Right ventricle myocardium inferior (tissue), 1 donor: ENCODE measurements at regions of chr1 and their contacts with region 1.

Region 1: GRCh38 chr1:6743189-6744101 is 41.8 kb upstream of the CAMTA1 start:
- DNase-seq: no peak
- ATAC-seq: peak; percentile 93

Region 2: DNA sequence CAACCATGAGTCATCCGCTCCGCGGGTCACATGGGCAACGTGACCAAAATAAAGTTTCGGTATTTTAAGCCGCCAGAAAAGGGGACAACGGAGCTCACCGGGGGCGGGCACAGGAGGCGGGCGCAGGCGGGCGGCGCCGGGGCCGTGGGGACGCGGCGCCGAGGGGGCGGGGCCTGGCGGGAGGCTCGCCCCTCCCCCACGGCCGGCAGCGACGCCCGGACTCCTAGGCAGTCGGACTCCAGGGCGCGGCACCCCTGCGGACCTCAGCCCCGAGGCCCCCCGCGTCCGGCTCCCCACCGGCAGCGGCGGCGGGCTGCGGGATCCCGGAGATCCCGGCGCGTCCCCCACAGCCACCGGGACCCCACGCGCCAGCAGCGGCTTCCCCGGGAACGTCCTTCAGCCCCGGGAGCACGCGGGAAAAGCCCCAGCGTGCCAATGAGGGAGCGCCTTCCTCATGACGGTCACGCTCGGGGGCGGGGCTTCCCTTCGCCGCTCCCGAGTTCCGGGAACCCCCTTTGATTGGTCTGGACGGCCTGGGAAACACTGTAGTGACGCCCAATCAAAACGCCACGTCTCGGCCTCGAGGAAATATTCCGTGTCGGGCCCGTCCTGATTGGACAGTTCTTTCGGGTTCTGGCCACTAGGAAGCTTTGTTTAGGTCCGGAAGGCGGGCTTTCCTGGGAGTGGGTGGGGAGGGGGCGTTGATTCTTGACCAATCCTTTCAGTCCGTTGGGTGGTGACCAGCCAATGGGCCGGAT is 41.3 kb after region 1 on chr1:
- intact Hi-C with region 1: loop called (anchors 1 kb)
- DNase-seq: peak; percentile 99
- ATAC-seq: peak; percentile 93